Heart right ventricle (tissue), 16 donors: ENCODE measurements at regions of chr3 and their contacts with region 1.

Region 1: DNA sequence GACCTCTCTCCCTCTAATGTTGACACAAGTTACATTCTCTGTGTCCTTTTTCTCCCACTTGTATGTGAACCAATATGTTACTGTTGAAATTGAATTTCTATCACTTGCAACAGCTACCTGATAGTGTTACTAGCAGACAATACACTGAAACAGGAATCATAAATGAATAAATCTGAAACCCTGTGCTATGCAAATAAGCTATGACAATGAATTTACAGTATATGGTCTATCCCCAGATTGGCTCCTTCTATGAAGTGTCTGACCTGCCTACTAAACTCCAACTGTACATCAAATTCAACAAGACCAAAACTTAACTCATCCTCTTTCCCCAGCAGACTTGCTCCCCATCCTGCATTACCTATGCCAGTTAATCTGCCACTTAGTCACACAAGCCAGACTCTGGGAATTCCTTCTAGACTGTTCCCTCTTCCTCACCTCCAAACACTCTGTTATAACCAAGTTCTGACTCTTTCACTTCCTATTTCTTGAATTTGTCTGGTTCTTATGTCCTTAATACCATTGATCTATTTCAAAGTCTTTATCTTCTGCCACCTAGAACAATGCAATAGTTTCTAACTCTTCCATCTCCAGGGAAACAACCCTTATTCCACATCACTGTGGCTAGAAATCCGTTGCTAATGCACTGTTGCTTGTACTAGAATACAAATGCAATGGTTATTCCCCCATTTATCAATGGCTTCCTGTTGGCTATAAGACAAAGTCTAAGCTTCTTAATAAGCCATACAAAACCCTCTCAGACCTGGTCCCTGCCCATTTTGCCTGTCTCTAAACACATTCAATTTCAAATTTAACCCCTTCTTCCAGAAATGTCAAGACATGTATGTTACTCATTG is 13.4 kb upstream of the ZNF639 start:
- DNase-seq: no peak
- ATAC-seq: no peak
- H3K4me3 ChIP-seq: no peak overlapping the region
- H3K27ac ChIP-seq: no peak overlapping the region
- H3K4me1 ChIP-seq: no peaks in the 10 kb centered on the region
- H3K27me3 ChIP-seq: peaks cover 0 to 12% (median 0%) of the 10 kb centered on the region in 7 donors
- CTCF ChIP-seq: no peak

Region 2: DNA sequence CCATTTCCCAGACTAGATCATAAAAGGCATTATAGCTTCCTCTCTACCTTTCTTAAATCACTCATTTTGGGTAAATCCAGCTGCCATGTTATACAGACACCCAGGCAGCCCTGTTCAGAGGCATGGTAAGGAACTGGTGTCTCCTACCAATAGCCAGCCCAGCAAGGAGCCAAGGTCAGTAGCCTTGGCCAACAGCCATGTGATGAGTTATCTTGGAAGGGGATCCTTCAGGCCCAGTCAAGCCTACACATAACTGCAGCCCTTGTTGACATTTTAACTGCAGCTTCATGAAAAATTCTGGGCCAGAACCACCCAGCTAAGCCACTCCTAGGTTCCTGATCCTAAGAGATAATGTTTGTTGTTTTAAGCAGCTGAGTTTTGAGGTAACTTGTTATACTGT is 208.8 kb before region 1 on chr3:
- intact Hi-C with region 1: loop called in 3 of 10 experiments (anchors 2 to 10 kb)
- DNase-seq: no peak
- ATAC-seq: no peak
- H3K4me3 ChIP-seq: no peak overlapping the region
- H3K27ac ChIP-seq: no peak overlapping the region
- H3K4me1 ChIP-seq: no peaks in the 10 kb centered on the region
- H3K27me3 ChIP-seq: peaks cover 0 to 7% (median 0%) of the 10 kb centered on the region in 7 donors
- CTCF ChIP-seq: no peak

Region 3: DNA sequence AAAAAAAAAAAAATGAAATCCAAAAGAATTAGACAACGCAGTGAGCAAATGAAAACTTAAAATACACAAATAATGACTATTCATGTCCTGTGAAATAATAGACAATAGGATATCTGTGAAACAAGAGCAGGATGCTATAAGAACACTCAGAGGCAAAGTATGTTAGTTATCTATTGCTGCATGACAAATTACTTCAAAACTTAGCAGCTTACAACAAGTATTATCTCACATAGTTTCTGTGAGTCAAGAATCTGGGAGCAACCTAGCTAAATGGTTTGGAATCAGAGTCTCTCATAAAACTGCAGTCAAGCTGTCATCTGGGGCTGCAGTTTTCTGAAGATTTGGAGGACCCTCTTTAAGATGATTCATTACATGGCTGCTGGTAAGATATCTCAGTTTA is 201.4 kb before region 1 on chr3:
- intact Hi-C with region 1: loop called in 4 of 10 experiments (anchors 2 to 10 kb)
- DNase-seq: no peak
- ATAC-seq: no peak
- H3K4me3 ChIP-seq: no peak overlapping the region
- H3K27ac ChIP-seq: no peak overlapping the region
- H3K4me1 ChIP-seq: no peaks in the 10 kb centered on the region
- H3K27me3 ChIP-seq: peaks cover 0 to 4% (median 0%) of the 10 kb centered on the region in 7 donors
- CTCF ChIP-seq: no peak